CD4-positive, alpha-beta memory T cell (primary cell): ENCODE measurements at regions of chr2 and their contacts with region 1.

Region 1: DNA sequence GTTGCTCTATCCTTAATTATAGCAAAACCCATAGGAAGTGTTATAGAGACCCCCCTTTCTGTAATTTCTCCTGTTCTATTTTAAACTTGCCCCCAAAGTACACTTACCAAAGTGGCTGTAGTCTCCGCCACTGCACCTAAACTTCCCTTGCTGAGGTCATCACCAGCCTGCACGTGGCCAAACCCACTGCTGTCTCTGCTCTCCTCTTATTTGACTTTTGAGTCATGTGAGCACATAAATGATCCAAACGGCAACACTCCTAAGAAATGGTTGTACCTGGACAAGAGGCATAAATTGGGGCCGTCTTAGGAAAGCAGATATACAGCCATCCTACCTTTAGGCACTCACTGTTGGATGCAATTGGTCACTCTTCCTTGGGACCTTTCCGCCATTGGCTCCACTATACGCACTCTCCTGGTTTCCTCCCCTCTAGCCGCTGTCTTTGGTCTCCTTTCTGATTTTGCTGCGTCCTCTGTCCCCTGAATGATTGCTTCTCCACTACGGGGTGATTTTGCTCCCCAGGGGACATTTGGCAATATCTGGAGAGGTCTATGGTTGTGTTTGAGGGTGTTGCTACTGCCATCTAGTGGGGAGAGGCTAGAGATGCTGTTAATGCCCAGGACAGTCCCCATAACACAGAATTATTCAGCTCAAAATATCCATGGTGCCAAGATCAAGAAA is 19.2 kb upstream of the IL36G start:
- DNase-seq: peak in 4 of 5 donors; percentile 35 to 53 (median 52)
- H3K4me3 ChIP-seq: no peak overlapping the region
- H3K4me3 Mint-ChIP-seq: no peak overlapping the region
- H3K27ac ChIP-seq: no peak overlapping the region
- H3K27ac Mint-ChIP-seq: no peak overlapping the region
- H3K4me1 ChIP-seq: no peaks in the 10 kb centered on the region
- H3K4me1 Mint-ChIP-seq: no peaks in the 10 kb centered on the region
- H3K27me3 ChIP-seq: no peaks in the 10 kb centered on the region
- H3K27me3 Mint-ChIP-seq: peaks cover 5 to 10% of the 10 kb centered on the region in 2 donors

Region 2: GRCh38 chr2:112493858-112494648 is 464.5 kb before region 1 on chr2:
- CTCF ChIA-PET with region 1: no interaction called
- POLR2A ChIA-PET with region 1: no interaction called
- intact Hi-C with region 1: no loop called
- DNase-seq: no peak
- H3K4me3 ChIP-seq: no peak overlapping the region
- H3K4me3 Mint-ChIP-seq: no peak overlapping the region
- H3K27ac ChIP-seq: no peak overlapping the region
- H3K27ac Mint-ChIP-seq: no peak overlapping the region
- H3K4me1 ChIP-seq: no peaks in the 10 kb centered on the region
- H3K4me1 Mint-ChIP-seq: peaks cover 0 to 2% (median under 1%) of the 10 kb centered on the region in 4 donors
- H3K27me3 ChIP-seq: no peaks in the 10 kb centered on the region
- H3K27me3 Mint-ChIP-seq: no peaks in the 10 kb centered on the region

Region 3: GRCh38 chr2:112941753-112942658 is 16.6 kb before region 1 on chr2:
- CTCF ChIA-PET with region 1: interaction called, 12 read pairs
- POLR2A ChIA-PET with region 1: no interaction called
- intact Hi-C with region 1: no loop called
- DNase-seq: peak; percentile 28 to 48 (median 41)
- H3K4me3 ChIP-seq: no peak overlapping the region
- H3K4me3 Mint-ChIP-seq: no peak overlapping the region
- H3K27ac ChIP-seq: no peak overlapping the region
- H3K27ac Mint-ChIP-seq: no peak overlapping the region
- H3K4me1 ChIP-seq: no peaks in the 10 kb centered on the region
- H3K4me1 Mint-ChIP-seq: peaks cover 0 to 5% (median 0%) of the 10 kb centered on the region in 4 donors
- H3K27me3 ChIP-seq: no peaks in the 10 kb centered on the region
- H3K27me3 Mint-ChIP-seq: peaks cover 1 to 4% of the 10 kb centered on the region in 2 donors

Region 4: DNA sequence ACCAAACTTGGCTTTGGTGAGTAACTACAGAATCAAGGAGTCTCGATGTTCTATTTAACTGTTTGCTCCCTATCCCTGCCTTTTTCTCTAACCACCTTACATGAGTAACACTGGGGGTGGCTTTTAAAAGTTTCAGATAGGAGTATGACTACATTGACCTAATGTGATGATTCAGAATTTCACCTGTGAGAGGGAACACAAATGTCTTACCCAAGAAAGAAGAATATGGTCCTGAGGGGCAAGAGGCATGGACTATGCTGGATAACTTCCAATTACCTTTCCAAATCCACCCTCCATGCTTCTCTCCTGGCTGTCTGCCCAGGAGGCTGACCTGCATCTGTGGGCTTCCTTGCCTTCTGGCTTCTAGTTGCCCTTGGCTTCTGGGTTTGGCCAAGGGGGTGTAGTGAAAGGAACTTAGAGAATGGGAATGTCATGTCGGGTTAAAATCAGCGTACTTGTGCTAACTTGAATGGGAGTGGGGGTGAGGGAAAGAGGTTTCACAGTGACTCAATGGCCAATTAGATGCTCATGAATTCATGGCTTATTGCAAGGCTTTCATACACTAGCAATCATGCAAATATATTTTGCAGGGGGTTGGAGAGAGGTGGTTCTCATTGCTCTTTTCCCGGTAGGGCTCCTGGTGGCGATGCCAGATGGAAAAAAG is 14.0 kb after region 1 on chr2:
- CTCF ChIA-PET with region 1: interaction called, 10 read pairs
- POLR2A ChIA-PET with region 1: no interaction called
- intact Hi-C with region 1: no loop called
- DNase-seq: no peak
- H3K4me3 ChIP-seq: no peak overlapping the region
- H3K4me3 Mint-ChIP-seq: no peak overlapping the region
- H3K27ac ChIP-seq: no peak overlapping the region
- H3K27ac Mint-ChIP-seq: no peak overlapping the region
- H3K4me1 ChIP-seq: peaks cover 8% of the 10 kb centered on the region
- H3K4me1 Mint-ChIP-seq: peaks cover 4 to 15% (median 9%) of the 10 kb centered on the region in 4 donors
- H3K27me3 ChIP-seq: no peaks in the 10 kb centered on the region
- H3K27me3 Mint-ChIP-seq: peaks cover 7 to 12% of the 10 kb centered on the region in 2 donors

Region 5: DNA sequence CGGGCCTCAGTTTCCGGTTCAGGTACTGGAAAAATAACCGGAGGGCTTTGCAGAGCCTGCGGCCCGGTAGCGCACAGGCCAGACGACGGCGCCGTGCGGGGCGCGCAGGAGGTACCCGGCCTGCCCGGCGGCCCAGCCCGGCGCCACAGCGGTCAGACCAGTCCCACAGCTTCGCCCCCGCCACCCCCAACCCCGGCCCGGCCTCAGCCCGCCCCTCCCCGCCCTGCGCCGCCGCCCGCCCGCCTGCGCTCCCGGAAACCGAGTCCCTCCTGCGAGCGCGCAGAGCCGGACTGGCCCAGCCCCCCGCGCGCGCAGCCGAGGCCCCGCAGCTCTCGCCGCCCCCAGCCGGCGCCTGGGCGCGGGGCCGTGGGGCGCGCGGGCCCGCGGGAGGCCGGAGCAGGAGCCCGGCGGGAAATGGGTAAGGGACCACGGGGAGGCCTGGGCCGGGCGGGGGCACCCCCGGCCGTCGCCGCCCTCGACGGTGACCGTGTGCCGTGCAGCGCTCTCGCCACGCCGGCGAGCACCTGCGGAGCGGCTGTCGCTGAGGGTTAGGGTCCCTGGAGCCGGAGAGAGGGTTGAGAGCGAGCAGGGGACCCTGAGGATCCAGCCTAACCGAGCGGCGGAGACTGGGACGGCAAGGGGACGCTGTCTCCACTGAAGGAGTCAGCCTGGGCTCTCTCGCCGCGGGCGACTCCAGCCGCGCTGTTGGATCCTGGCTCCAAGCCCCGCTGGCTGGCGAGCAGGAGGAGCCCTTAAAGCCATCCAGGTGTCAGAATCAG is 198.7 kb after region 1 on chr2:
- CTCF ChIA-PET with region 1: no interaction called
- POLR2A ChIA-PET with region 1: no interaction called
- intact Hi-C with region 1: no loop called
- DNase-seq: peak in 4 of 5 donors; percentile 39 to 57 (median 50)
- H3K4me3 ChIP-seq: peak overlapping the region; percentile 57 to 74
- H3K4me3 Mint-ChIP-seq: peak overlapping the region; percentile 85 to 95 (median 88)
- H3K27ac ChIP-seq: peak overlapping the region; percentile 55
- H3K27ac Mint-ChIP-seq: peak overlapping the region; percentile 57 to 88 (median 74)
- H3K4me1 ChIP-seq: peaks cover 27% of the 10 kb centered on the region
- H3K4me1 Mint-ChIP-seq: peaks cover 13 to 28% (median 23%) of the 10 kb centered on the region in 4 donors
- H3K27me3 ChIP-seq: no peaks in the 10 kb centered on the region
- H3K27me3 Mint-ChIP-seq: no peaks in the 10 kb centered on the region